Activated naive CD4-positive, alpha-beta T cell treated with anti-CD3 and anti-CD28 coated beads for 36 hours (primary cell): ENCODE measurements at regions of chr1 and their contacts with region 1.

Region 1: DNA sequence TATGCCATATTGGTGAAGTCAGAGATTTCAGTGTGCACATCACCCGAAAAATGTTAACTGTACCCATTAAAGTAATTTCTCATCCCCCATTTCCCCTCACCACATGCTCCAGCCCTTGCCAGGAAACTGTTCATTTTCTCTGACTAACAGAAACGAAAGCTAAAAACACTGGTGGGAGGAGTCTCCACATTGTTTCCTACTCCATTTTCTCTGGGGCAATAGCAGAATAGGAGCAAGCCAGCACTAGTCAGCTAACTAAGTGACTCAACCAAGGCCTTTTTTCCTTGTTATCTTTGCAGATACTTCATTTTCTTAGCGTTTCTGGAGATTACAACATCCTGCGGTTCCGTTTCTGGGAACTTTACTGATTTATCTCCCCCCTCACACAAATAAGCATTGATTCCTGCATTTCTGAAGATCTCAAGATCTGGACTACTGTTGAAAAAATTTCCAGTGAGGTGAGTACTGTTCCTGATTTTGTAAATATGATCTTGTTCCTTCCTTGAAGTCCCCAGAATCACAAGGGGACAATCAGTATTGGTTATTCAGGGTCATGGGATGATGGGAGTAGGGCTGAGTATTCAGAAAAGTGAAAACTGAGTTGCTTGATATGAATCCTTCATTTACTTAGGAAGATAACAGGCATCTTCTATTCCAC is at the start of gene IFI16:
- DNase-seq: peak; percentile 82
- H3K4me3 Mint-ChIP-seq: peak within 1 kb of the TSS; percentile 91
- H3K27ac Mint-ChIP-seq: peak within 1 kb of the TSS; percentile 99
- H3K4me1 Mint-ChIP-seq: peaks cover 39% of the 10 kb centered on the region
- H3K27me3 Mint-ChIP-seq: no peaks in the 10 kb centered on the region
- total RNA-seq, gene IFI16: 287 to 288 TPM

Region 2: GRCh38 chr1:157138220-157139051 is 1871.4 kb before region 1 on chr1 and contains the start of gene ETV3:
- CTCF ChIA-PET with region 1: no interaction called
- intact Hi-C with region 1: loop called (anchors 10 kb)
- DNase-seq: peak; percentile 95
- H3K4me3 Mint-ChIP-seq: peak within 1 kb of the TSS; percentile 96
- H3K27ac Mint-ChIP-seq: peak within 1 kb of the TSS; percentile 85
- H3K4me1 Mint-ChIP-seq: peaks cover 56% of the 10 kb centered on the region
- H3K27me3 Mint-ChIP-seq: no peaks in the 10 kb centered on the region
- total RNA-seq, gene ETV3: 23.2 to 23.3 TPM

Region 3: DNA sequence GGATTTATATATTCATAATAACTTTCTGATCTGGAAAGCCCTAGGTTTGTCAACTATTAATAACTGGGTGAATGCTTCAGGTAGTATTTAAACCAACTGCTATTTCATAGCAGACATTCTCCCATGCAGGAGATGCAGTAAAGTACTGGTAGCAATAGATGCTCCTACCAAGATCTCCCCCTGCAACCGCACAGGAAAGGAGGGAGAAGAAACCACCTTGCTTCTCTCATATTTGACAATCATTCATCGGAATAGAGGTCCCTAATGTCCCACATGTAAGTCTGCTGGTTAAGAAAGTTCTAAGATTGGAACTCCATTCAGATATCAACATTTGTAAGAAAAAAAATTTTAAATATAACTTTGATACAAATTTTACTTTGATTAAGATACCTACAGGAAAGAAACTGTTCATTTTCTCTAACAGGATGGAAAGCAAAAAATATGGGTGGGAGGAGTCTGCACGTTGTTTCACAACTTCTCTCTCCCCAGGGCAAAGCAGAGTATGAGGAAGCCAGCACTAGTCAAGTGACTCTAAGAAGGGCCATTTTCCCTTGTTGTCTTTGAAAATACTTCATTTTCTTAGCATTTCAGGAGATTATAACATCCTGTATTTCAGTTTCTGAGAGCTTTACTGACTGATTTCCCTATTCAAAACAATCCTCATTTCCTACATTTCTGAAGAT is 78.6 kb before region 1 on chr1 and contains the start of gene PYHIN1:
- CTCF ChIA-PET with region 1: no interaction called
- intact Hi-C with region 1: loop called (anchors 1 kb)
- DNase-seq: peak; percentile 37
- H3K4me3 Mint-ChIP-seq: peak within 1 kb of the TSS; percentile 75
- H3K27ac Mint-ChIP-seq: peak within 1 kb of the TSS; percentile 86
- H3K4me1 Mint-ChIP-seq: peaks cover 35% of the 10 kb centered on the region
- H3K27me3 Mint-ChIP-seq: peaks cover 6% of the 10 kb centered on the region
- total RNA-seq, gene PYHIN1: 4.1 to 4.4 TPM

Region 4: GRCh38 chr1:158969855-158970254 is 40.0 kb before region 1 on chr1:
- CTCF ChIA-PET with region 1: interaction called, 3 read pairs
- intact Hi-C with region 1: loop called (anchors 1 kb)
- DNase-seq: peak; percentile 30
- H3K4me3 Mint-ChIP-seq: no peak overlapping the region
- H3K27ac Mint-ChIP-seq: peak overlapping the region; percentile 89
- H3K4me1 Mint-ChIP-seq: peaks cover 35% of the 10 kb centered on the region
- H3K27me3 Mint-ChIP-seq: peaks cover 5% of the 10 kb centered on the region

Region 5: DNA sequence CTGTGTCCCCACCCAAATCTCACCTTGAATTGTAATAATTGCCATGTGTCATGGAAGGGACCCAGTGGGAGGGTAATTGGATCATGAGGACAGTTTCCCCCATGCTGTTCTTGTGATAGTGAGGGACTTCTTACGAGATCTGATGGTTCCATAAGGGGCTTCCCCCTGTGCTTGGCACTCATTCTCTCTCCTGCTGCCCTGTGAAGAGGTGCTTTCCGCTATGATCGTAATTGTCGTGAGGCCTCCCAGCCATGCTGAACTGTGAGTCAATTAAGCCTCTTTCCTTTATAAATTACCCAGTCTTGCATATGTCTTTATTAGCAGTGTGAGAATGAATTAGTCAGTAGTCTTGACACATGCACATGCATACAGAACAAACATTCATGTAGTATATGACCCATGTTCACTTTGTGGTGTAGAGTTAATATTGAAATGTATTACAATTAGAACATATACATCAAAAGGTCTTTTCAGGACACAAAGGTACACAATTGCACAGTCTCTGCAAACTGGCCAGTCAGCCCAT is 17.0 kb before region 1 on chr1:
- CTCF ChIA-PET with region 1: interaction called, 7 read pairs
- intact Hi-C with region 1: loop called (anchors 1 kb)
- DNase-seq: peak; percentile 55
- H3K4me3 Mint-ChIP-seq: no peak overlapping the region
- H3K27ac Mint-ChIP-seq: peak overlapping the region; percentile 26
- H3K4me1 Mint-ChIP-seq: peaks cover 31% of the 10 kb centered on the region
- H3K27me3 Mint-ChIP-seq: no peaks in the 10 kb centered on the region

Region 6: GRCh38 chr1:159924981-159925712 is 915.3 kb after region 1 on chr1 and contains the start of gene TAGLN2:
- CTCF ChIA-PET with region 1: no interaction called
- intact Hi-C with region 1: loop called (anchors 1 kb)
- DNase-seq: peak; percentile 89
- H3K4me3 Mint-ChIP-seq: peak within 1 kb of the TSS; percentile 91
- H3K27ac Mint-ChIP-seq: peak within 1 kb of the TSS; percentile 93
- H3K4me1 Mint-ChIP-seq: peaks cover 42% of the 10 kb centered on the region
- H3K27me3 Mint-ChIP-seq: no peaks in the 10 kb centered on the region
- total RNA-seq, gene TAGLN2: 453 to 454 TPM

Region 7: DNA sequence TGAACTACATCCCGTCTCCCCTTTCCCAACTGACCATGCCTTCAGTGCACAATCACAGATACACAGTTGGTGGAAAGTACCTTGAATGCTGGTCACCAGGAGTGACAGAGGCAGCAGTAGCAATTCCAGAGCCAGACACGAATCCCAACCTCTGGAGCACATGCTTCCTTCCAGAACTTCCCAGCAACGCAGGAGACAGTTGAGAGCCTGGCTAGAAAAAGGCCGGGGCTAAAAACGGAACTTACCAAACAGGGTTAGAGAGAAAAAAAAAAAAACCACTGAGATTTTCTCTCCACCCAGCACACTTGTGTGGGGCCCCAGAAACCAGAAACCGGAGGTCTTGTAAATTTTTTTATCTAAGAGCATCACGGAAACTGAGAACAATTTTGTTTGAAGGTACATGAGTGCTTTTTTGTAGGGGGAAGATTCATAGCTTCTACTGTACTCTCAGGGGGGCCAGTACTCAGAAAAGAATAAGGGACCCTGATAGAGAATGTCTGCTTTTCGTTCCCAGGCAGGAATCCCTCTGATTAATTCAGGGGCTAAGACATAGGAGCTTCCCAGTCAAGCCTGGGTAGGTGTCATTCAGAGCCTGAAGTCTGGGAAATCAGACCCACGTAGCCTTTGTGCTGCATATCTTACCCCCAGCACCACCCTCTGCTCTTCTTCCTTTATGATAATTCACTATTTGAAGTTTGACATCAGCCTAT is 1701.9 kb after region 1 on chr1 and contains the start of gene CD48:
- CTCF ChIA-PET with region 1: no interaction called
- intact Hi-C with region 1: loop called (anchors 5 kb)
- DNase-seq: peak; percentile 70
- H3K4me3 Mint-ChIP-seq: no peak within 1 kb of the TSS
- H3K27ac Mint-ChIP-seq: no peak within 1 kb of the TSS
- H3K4me1 Mint-ChIP-seq: peaks cover 28% of the 10 kb centered on the region
- H3K27me3 Mint-ChIP-seq: no peaks in the 10 kb centered on the region
- total RNA-seq, gene CD48: 338 to 340 TPM